H1 (cell line): ENCODE measurements at regions of chr9 and their contacts with region 1.

Region 1: GRCh38 chr9:75027187-75028107 is 646 bp downstream of the CARNMT1 start:
- DNase-seq: peak; percentile 1 to 79
- H3K4me3 ChIP-seq: peak overlapping the region; percentile 61 to 99 (median 80)
- H3K27ac ChIP-seq: peak overlapping the region; percentile 87
- H3K4me1 ChIP-seq: peaks cover 0 to 2% (median 0%) of the 10 kb centered on the region in 4 experiments; a peak in 1 of 7 replicates
- H3K27me3 ChIP-seq: no peaks in the 10 kb centered on the region
- CTCF ChIP-seq: peak in 2 of 3 experiments; percentile 33 to 35; a peak in 3 of 4 replicates
- EP300 ChIP-seq: no peak
- POLR2A ChIP-seq: no peak
- RAD21 ChIP-seq: no peak

Region 2: GRCh38 chr9:74846771-74847170 is 180.7 kb before region 1 on chr9:
- CTCF ChIA-PET with region 1: no interaction called
- POLR2A ChIA-PET with region 1: no interaction called
- DNase-seq: no peak
- H3K4me3 ChIP-seq: no peak overlapping the region
- H3K27ac ChIP-seq: no peak overlapping the region
- H3K4me1 ChIP-seq: no peaks in the 10 kb centered on the region
- H3K27me3 ChIP-seq: no peaks in the 10 kb centered on the region
- CTCF ChIP-seq: no peak
- EP300 ChIP-seq: no peak
- POLR2A ChIP-seq: no peak
- RAD21 ChIP-seq: no peak

Region 3: DNA sequence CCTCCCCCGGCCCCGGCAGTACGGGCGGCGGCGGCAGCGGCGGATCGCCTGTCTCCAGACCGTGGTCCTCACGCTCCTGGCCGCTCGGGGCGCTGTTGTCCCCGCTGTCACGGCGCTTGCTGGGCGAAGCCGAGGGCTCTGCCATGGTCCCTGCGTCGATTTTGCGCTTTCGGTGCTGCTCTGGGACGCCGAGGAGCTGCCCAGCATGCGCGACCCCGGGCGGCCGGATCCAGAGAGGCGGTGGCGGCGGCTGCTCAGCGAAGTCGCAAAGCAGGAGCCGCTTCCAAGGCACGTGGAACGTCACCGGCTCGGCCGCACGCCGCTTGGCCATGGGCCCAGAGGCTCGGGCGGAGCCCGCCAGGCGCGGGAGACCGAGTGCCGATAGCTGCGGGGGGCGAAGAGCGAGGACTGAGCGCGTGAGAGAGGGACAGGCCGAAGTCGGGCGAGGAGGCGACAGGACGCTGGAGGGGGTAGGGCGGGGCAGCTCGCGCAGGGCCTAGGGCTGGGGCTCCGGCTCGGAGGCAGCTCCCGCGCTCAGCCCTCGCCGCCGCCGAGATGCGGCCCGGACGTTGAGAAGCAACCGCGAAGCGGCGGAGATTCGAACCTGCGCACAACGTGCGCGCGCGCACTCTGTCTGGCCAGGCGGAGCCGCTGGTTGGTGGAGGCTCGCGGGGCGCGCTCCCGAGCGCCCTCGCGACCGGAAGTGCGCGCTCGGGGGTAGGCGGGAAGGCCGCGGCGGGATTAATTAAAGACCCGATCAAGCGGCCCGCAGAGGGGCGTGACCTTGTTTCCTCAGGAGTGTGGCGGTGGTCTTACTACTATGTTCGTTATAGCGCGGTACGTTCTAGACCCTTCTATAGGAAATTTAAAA is 74.9 kb before region 1 on chr9 and contains the start of gene C9orf40:
- CTCF ChIA-PET with region 1: interaction called, 12 read pairs
- POLR2A ChIA-PET with region 1: interaction called, 4 read pairs
- DNase-seq: peak; percentile 60 to 94
- H3K4me3 ChIP-seq: peak within 1 kb of the TSS; percentile 50 to 80 (median 71)
- H3K27ac ChIP-seq: peak within 1 kb of the TSS; percentile 82; the same call in 1 of the 2 replicates
- H3K4me1 ChIP-seq: peaks cover 0 to 5% (median 2%) of the 10 kb centered on the region in 4 experiments; a peak in 3 of 7 replicates
- H3K27me3 ChIP-seq: no peaks in the 10 kb centered on the region
- CTCF ChIP-seq: peak; percentile 69 to 90 (median 82)
- EP300 ChIP-seq: no peak
- POLR2A ChIP-seq: peak; percentile 65 to 66; a peak in 2 of 3 replicates
- RAD21 ChIP-seq: peak; percentile 45 to 60
- total RNA-seq, gene C9orf40: 10.8 and 11.2 TPM in 2 replicates

Region 4: GRCh38 chr9:75017378-75017777 is 10.1 kb before region 1 on chr9:
- CTCF ChIA-PET with region 1: interaction called, 3 read pairs
- POLR2A ChIA-PET with region 1: interaction called, 14 read pairs
- DNase-seq: no peak
- H3K4me3 ChIP-seq: no peak overlapping the region
- H3K27ac ChIP-seq: no peak overlapping the region
- H3K4me1 ChIP-seq: peaks cover 0 to 2% (median 0%) of the 10 kb centered on the region in 4 experiments; a peak in 1 of 7 replicates
- H3K27me3 ChIP-seq: no peaks in the 10 kb centered on the region
- CTCF ChIP-seq: no peak
- EP300 ChIP-seq: no peak
- POLR2A ChIP-seq: no peak
- RAD21 ChIP-seq: no peak

Region 5: DNA sequence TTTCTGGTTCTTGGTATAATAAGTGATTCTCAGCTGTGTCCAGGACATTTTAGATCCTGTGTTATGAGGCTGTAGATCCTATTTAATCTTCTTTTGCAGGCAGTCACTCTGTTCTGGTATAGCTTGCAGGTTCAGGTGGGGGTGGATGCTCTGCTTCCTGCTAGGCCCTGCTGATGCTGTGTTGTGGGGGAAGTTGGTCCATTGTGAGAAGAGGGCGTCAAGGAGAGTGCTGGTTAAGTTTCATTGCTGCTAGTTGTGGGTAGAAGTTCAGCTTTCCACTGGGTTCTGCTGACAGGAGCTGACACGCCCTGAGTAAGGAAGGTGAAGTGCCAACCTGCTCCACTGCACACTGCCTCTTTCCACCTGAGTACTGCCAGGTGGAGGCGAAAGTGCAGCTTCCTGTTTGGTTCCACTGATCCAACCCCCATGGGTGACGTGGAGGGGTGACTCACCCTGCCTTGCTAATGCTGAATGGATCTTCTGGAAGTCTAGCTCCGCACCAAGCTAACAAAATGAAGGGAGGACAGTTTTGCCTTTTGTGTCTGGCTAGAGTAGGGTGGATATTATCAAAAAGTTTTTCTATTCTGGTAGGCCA is 44.2 kb after region 1 on chr9:
- CTCF ChIA-PET with region 1: interaction called, 10 read pairs
- POLR2A ChIA-PET with region 1: interaction called, 7 read pairs
- DNase-seq: no peak
- H3K4me3 ChIP-seq: no peak overlapping the region
- H3K27ac ChIP-seq: no peak overlapping the region
- H3K4me1 ChIP-seq: peaks cover 0 to 3% (median 0%) of the 10 kb centered on the region in 4 experiments; a peak in 2 of 7 replicates
- H3K27me3 ChIP-seq: no peaks in the 10 kb centered on the region
- CTCF ChIP-seq: no peak
- EP300 ChIP-seq: no peak
- POLR2A ChIP-seq: no peak
- RAD21 ChIP-seq: no peak

Region 6: DNA sequence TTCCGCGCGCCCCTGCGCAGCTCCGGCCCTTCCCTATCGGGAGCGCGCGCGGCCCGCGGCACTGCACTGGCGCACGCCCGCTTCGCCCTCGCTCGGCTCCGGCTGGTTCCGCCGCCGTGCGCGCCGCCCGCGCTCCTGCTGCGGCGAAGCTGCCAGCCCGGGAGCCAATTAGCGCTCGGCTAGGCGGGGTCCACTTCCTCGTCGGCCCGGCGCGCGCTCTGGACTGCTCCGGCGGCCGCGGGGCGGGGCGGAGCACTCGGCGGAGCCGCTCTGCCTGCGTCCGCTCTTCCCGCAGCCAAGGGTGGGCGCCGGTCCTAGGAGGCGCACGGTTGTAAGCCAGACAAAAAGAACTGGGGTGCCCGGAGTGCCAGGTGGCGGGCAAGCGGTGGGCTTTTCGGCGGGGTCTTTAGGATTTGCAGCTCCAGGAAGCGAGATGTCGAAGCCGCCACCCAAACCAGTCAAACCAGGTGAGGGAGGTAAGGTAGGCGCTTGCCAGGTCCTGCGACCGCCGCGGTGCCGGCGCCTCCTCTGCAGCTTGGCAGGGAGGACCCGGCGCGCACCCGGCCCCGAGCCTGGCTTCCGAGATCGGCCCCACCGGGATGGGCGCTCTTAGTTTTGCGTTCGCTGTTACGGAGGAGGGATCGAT is 60.9 kb after region 1 on chr9 and contains the start of gene OSTF1:
- CTCF ChIA-PET with region 1: interaction called, 4 read pairs
- POLR2A ChIA-PET with region 1: interaction called, 12 read pairs
- DNase-seq: peak in 1 of 2 experiments; percentile 81
- H3K4me3 ChIP-seq: peak within 1 kb of the TSS; percentile 80 to 85 (median 81)
- H3K27ac ChIP-seq: peak within 1 kb of the TSS; percentile 81
- H3K4me1 ChIP-seq: peaks cover 0 to 6% (median 3%) of the 10 kb centered on the region in 4 experiments; a peak in 4 of 7 replicates
- H3K27me3 ChIP-seq: no peaks in the 10 kb centered on the region
- CTCF ChIP-seq: no peak
- EP300 ChIP-seq: 0 out of 3 replicates have a peak, but pooled peaks of 1 of the 2 experiments have one; percentile 5
- POLR2A ChIP-seq: peak; percentile 58 to 66
- RAD21 ChIP-seq: no peak
- total RNA-seq, gene OSTF1: 18.6 and 18.9 TPM in 2 replicates

Region 7: GRCh38 chr9:75161116-75161857 is 133.8 kb after region 1 on chr9:
- CTCF ChIA-PET with region 1: no interaction called
- POLR2A ChIA-PET with region 1: no interaction called
- DNase-seq: no peak
- H3K4me3 ChIP-seq: no peak overlapping the region
- H3K27ac ChIP-seq: no peak overlapping the region
- H3K4me1 ChIP-seq: no peaks in the 10 kb centered on the region
- H3K27me3 ChIP-seq: no peaks in the 10 kb centered on the region
- CTCF ChIP-seq: no peak
- EP300 ChIP-seq: no peak
- POLR2A ChIP-seq: no peak
- RAD21 ChIP-seq: no peak